ENCODE measurements at regions of chr3 and their contacts with region 1.

Region 1: DNA sequence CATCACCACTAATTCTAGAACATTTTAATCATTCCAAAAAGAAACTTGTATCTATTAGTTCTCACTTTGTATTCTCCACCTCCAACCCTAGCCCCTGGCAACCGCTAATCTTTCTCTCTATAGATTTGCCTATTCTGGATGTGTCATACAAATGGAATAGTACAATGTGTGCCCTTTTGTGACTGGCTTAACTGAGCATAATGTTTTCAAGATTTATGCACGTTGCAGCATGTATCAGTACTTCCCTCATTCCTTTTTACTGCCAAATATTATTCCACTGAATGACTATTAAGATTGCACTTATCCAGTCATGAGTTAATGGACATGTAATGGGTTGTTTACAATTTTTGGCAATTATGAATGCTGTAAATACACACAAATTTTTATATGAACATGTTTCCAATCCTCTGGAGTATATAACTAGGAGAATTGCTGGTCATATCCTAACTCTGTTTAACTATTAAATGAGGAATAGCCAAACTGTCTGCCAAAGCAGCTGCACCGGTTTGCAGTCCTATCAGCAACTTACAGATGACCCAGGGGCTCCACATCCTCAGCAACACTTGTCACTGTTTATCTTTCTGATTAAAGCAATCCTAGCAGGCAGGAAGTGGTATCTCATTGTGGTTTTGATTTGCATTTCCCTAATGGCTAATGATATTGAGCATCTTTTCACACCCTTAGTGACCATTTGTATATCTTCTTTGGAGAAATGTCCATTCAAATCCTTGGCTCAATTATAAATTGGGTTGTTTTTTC is 42.9 kb downstream of the DCUN1D1 start:
- DNase-seq: no peak
- ATAC-seq: no peak
- H3K4me3 Mint-ChIP-seq: no peak overlapping the region
- H3K27ac Mint-ChIP-seq: no peak overlapping the region
- H3K4me1 Mint-ChIP-seq: peaks cover 14% of the 10 kb centered on the region
- H3K27me3 Mint-ChIP-seq: no peaks in the 10 kb centered on the region
- CTCF ChIP-seq: no peak

Region 2: GRCh38 chr3:182895513-182896112 is 41.9 kb before region 1 on chr3:
- CTCF ChIA-PET with region 1: no interaction called
- POLR2A ChIA-PET with region 1: no interaction called
- intact Hi-C with region 1: no loop called
- DNase-seq: no peak
- ATAC-seq: no peak
- H3K4me3 Mint-ChIP-seq: no peak overlapping the region
- H3K27ac Mint-ChIP-seq: no peak overlapping the region
- H3K4me1 Mint-ChIP-seq: no peaks in the 10 kb centered on the region
- H3K27me3 Mint-ChIP-seq: no peaks in the 10 kb centered on the region
- CTCF ChIP-seq: no peak

Region 3: DNA sequence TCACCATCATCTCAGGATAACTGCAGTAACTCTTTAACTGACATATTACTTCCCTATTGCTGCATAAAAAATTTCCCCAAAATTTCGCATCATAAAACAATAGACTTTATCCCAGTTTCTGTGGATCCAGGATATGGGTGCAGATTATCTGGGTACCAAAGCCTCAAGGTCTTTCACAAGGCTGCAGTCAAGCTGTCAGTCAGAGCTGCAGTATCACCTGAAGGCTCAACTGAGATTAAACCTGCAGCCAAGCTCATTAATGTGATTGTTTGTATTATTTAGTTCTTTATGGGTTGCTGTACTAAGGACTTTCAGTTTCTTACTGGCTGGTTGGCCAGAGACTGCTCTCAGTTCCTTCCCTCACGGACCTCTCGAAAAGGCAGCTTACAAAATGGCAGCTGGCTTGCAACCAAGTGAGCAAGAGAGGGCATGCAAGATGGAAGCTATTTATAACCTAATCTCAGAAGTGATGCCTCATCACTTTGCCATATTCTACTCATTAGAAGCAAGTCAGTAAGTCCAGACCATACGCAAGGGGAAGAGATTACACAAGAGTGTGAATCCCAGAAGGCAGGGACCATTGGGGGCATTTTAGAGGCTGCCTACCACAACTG is 12.0 kb before region 1 on chr3:
- CTCF ChIA-PET with region 1: no interaction called
- POLR2A ChIA-PET with region 1: no interaction called
- intact Hi-C with region 1: loop called (anchors 2 kb)
- DNase-seq: no peak
- ATAC-seq: no peak
- H3K4me3 Mint-ChIP-seq: no peak overlapping the region
- H3K27ac Mint-ChIP-seq: no peak overlapping the region
- H3K4me1 Mint-ChIP-seq: peaks cover 13% of the 10 kb centered on the region
- H3K27me3 Mint-ChIP-seq: no peaks in the 10 kb centered on the region
- CTCF ChIP-seq: no peak

Measured in activated B cell treated with CpG ODN at 0.5 μM for 24 hours (primary cell).